SK-N-SH (cell line): ENCODE measurements at regions of chr17 and their contacts with region 1.

Region 1: GRCh38 chr17:57955183-57955931 is at the start of gene CUEDC1:
- DNase-seq: peak; percentile 98
- H3K4me3 ChIP-seq: peak within 1 kb of the TSS; percentile 67 to 92
- H3K27ac ChIP-seq: peak within 1 kb of the TSS; percentile 71 to 79
- H3K4me1 ChIP-seq: peaks cover 26 to 41% of the 10 kb centered on the region in 2 experiments; a peak in 3 of 4 replicates
- H3K27me3 ChIP-seq: no peaks in the 10 kb centered on the region
- CTCF ChIP-seq: no peak
- EP300 ChIP-seq: peak in 1 of 2 experiments; percentile 43; a peak in 1 of 4 replicates
- RAD21 ChIP-seq: peak; percentile 17; the same call in 1 of the 2 replicates
- polyA plus RNA-seq, gene CUEDC1: 50.3 and 58.9 TPM in 2 replicates

Region 2: GRCh38 chr17:57902800-57903759 is 52.3 kb before region 1 on chr17:
- CTCF ChIA-PET with region 1: interaction called, 13 read pairs
- POLR2A ChIA-PET with region 1: interaction called, 5 read pairs
- DNase-seq: no peak
- H3K4me3 ChIP-seq: no peak overlapping the region
- H3K27ac ChIP-seq: peak overlapping the region; percentile 43 to 86
- H3K4me1 ChIP-seq: peaks cover 49 to 53% of the 10 kb centered on the region in 2 experiments; a peak in 3 of 4 replicates
- H3K27me3 ChIP-seq: no peaks in the 10 kb centered on the region
- CTCF ChIP-seq: no peak
- EP300 ChIP-seq: peak in 1 of 2 experiments; percentile 67; a peak in 1 of 4 replicates
- RAD21 ChIP-seq: no peak

Region 3: GRCh38 chr17:57939797-57940196 is 15.6 kb before region 1 on chr17:
- CTCF ChIA-PET with region 1: interaction called, 43 read pairs
- POLR2A ChIA-PET with region 1: interaction called, 5 read pairs
- DNase-seq: no peak
- H3K4me3 ChIP-seq: no peak overlapping the region
- H3K27ac ChIP-seq: no peak overlapping the region
- H3K4me1 ChIP-seq: peaks cover 43 to 48% of the 10 kb centered on the region in 2 experiments; a peak in 3 of 4 replicates
- H3K27me3 ChIP-seq: no peaks in the 10 kb centered on the region
- CTCF ChIP-seq: no peak
- EP300 ChIP-seq: no peak
- RAD21 ChIP-seq: no peak

Region 4: GRCh38 chr17:57970706-57971105 is 15.3 kb after region 1 on chr17:
- CTCF ChIA-PET with region 1: interaction called, 43 read pairs
- POLR2A ChIA-PET with region 1: interaction called, 8 read pairs
- DNase-seq: no peak
- H3K4me3 ChIP-seq: no peak overlapping the region
- H3K27ac ChIP-seq: peak overlapping the region; percentile 26 to 42; a peak in 2 of 4 replicates
- H3K4me1 ChIP-seq: peaks cover 13 to 25% of the 10 kb centered on the region in 2 experiments; a peak in 2 of 4 replicates
- H3K27me3 ChIP-seq: no peaks in the 10 kb centered on the region
- CTCF ChIP-seq: no peak
- EP300 ChIP-seq: no peak; a peak in 1 of 4 replicates
- RAD21 ChIP-seq: no peak

Region 5: GRCh38 chr17:57987580-57988421 is 32.4 kb after region 1 on chr17 and contains the start of gene VEZF1:
- CTCF ChIA-PET with region 1: interaction called, 12 read pairs
- POLR2A ChIA-PET with region 1: interaction called, 5 read pairs
- DNase-seq: peak; percentile 96
- H3K4me3 ChIP-seq: peak within 1 kb of the TSS; percentile 78 to 98
- H3K27ac ChIP-seq: peak within 1 kb of the TSS; percentile 96 to 100
- H3K4me1 ChIP-seq: peaks cover 20 to 47% of the 10 kb centered on the region in 2 experiments
- H3K27me3 ChIP-seq: no peaks in the 10 kb centered on the region
- CTCF ChIP-seq: no peak
- EP300 ChIP-seq: no peak
- RAD21 ChIP-seq: no peak
- polyA plus RNA-seq, gene VEZF1: 35.1 and 43.0 TPM in 2 replicates